Natural killer cell (primary cell): ENCODE measurements at regions of chr6 and their contacts with region 1.

Region 1: DNA sequence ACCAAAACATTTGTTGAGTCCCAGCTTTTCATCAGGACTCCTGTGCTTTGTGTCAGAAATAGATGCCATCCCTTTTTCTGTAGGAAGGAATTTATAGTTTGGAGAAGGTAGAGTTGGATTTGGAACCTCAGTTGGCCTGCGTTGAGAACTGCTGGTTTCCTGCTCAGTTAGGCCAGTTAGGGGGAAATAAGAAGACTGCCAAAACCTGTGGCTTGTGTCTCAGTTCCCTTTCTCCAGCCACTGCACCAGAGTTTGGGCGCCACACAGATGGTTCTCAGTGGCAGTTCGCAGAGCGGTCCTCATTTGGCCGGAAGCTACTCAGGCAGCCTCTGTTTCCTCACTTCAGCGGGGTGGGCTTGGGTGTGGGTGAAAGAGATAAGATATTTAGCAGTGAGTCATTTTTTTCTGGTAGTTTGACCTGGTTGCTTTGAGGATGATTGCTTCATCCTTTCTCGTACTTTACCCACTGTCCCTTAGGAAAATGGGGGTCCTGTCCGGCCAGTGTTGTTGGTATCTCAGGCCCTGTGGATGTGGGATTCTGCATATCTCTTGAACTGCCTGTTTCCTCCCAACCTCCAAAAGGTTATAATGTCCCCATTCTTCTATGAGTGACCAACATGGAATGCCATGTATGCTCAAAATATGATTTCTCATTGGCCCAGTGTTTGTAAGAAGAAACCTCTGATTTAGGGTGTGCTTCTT is 53.7 kb downstream of the JARID2 start:
- DNase-seq: peak; percentile 56 to 65
- ATAC-seq: peak; percentile 84 to 94 (median 90)
- H3K4me3 ChIP-seq: no peak overlapping the region
- H3K4me3 Mint-ChIP-seq: peak overlapping the region; percentile 71
- H3K27ac ChIP-seq: peak overlapping the region; percentile 72
- H3K27ac Mint-ChIP-seq: peak overlapping the region; percentile 93 to 94
- H3K4me1 ChIP-seq: peaks cover 65% of the 10 kb centered on the region
- H3K4me1 Mint-ChIP-seq: peaks cover 76 to 80% of the 10 kb centered on the region in 2 donors
- H3K27me3 ChIP-seq: no peaks in the 10 kb centered on the region
- H3K27me3 Mint-ChIP-seq: no peaks in the 10 kb centered on the region
- CTCF ChIP-seq: no peak

Region 2: DNA sequence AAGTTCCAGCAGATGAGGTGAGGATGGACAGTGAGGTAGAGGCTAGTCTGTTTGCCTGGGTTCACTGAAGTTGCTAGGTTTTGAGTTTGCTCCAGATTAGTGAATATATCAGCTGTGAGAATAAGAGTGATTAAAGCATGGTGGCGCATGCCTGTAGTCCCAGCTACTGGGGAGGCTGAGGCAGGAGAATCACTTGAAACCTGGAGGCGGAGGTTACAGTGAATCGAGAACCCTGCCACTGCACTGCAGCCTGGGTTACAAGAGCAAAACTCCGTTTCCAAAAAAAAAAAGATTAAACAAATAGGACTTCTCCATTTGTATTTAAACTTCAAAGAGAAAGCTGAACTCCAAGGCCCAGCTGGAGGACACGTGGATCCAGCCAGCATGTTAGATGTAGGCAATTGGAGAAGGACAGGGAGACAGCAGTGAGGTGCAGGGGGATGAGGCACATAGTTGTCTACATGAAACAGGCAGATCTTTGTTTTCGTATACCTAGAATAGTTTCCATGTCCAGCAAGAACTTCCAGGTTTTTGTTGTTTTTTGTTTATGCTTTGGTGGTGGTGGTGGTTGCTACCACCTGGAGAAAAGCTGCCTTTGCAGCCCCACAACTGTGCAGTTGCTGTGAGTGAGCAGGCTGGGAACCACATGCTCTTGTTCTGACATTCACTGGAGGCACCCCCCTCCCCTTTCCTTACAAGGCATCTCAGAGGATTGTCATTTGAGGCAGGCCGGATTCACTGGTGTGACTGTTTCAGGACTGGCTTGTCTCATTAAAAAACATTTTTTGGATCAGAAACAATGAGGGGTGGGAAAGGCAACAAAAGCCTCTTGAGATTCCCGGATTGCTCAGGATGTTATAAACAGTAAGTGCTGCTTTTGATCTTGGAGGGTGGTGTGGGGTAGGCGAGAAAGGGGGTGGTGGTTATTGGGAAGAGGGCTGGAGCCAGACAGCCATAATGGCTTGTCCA is 18.6 kb after region 1 on chr6:
- intact Hi-C with region 1: no loop called
- DNase-seq: no peak
- ATAC-seq: no peak
- H3K4me3 ChIP-seq: no peak overlapping the region
- H3K4me3 Mint-ChIP-seq: no peak overlapping the region
- H3K27ac ChIP-seq: no peak overlapping the region
- H3K27ac Mint-ChIP-seq: peak overlapping the region; percentile 68 to 70
- H3K4me1 ChIP-seq: peaks cover 33% of the 10 kb centered on the region
- H3K4me1 Mint-ChIP-seq: peaks cover 86 to 95% of the 10 kb centered on the region in 2 donors
- H3K27me3 ChIP-seq: no peaks in the 10 kb centered on the region
- H3K27me3 Mint-ChIP-seq: no peaks in the 10 kb centered on the region
- CTCF ChIP-seq: no peak

Region 3: DNA sequence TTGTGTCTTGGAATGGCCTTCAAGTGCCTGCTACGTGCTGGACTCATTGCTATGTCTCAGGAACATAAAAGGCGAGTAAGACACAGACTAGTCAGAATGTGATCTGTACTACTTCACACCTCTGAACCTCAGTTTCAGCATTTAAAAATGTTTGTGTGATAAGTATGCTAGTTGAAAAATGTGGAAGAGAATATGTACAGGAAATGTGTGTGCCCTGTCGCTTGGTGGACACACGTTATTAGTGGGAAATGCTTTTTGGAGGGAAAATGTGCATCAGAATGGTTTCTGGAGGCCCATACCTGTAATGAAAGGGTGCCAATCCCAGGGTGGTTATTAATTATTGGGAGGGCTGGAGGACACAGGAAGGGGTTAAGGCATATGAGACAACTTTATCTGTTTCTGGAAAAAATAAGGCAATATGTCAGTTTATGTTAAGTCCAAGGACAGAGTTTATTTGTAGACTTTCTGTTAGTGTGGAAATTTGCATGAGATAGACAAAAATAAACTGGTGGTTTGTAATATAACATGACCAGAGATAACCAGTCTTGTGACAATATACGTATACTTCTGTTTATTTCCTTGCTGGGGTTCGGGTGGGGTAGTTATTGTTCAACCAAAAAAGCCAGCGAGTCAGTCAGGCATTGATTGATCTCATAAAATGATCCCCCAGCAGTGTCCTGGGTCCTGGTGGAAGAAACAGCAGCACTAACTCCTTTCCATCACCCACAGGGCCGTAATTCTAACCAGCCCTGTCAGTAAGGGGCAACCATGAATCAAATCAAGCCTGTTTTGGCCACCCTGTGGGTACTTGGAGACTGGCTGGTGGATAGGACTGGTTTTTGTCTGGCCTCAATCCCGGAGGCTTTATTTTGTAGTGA is 64.2 kb after region 1 on chr6:
- intact Hi-C with region 1: loop called (anchors 5 kb)
- DNase-seq: no peak
- ATAC-seq: peak; percentile 49 to 68 (median 65)
- H3K4me3 ChIP-seq: no peak overlapping the region
- H3K4me3 Mint-ChIP-seq: no peak overlapping the region
- H3K27ac ChIP-seq: peak overlapping the region; percentile 20
- H3K27ac Mint-ChIP-seq: no peak overlapping the region
- H3K4me1 ChIP-seq: peaks cover 48% of the 10 kb centered on the region
- H3K4me1 Mint-ChIP-seq: peaks cover 48% of the 10 kb centered on the region in 2 donors
- H3K27me3 ChIP-seq: no peaks in the 10 kb centered on the region
- H3K27me3 Mint-ChIP-seq: no peaks in the 10 kb centered on the region
- CTCF ChIP-seq: no peak